K562 (cell line): ENCODE measurements at regions of chr11 and their contacts with region 1.

Region 1: GRCh38 chr11:63838678-63839507 is at the start of gene MARK2:
- DNase-seq: peak; percentile 98 to 99 (median 98)
- ATAC-seq: peak; percentile 93
- H3K4me3 ChIP-seq: peak within 1 kb of the TSS; percentile 95
- H3K27ac ChIP-seq: peak within 1 kb of the TSS; percentile 78
- H3K4me1 ChIP-seq: peaks cover 24 to 27% of the 10 kb centered on the region in 2 experiments; a peak in 4 of 5 replicates
- H3K27me3 ChIP-seq: no peaks in the 10 kb centered on the region
- CTCF ChIP-seq: no peak
- EP300 ChIP-seq: no peak
- POLR2A ChIP-seq: peak; percentile 62; the same call in 1 of the 2 replicates
- RAD21 ChIP-seq: no peak
- polyA plus RNA-seq, gene MARK2: 0.32 to 0.45 TPM

Region 2: DNA sequence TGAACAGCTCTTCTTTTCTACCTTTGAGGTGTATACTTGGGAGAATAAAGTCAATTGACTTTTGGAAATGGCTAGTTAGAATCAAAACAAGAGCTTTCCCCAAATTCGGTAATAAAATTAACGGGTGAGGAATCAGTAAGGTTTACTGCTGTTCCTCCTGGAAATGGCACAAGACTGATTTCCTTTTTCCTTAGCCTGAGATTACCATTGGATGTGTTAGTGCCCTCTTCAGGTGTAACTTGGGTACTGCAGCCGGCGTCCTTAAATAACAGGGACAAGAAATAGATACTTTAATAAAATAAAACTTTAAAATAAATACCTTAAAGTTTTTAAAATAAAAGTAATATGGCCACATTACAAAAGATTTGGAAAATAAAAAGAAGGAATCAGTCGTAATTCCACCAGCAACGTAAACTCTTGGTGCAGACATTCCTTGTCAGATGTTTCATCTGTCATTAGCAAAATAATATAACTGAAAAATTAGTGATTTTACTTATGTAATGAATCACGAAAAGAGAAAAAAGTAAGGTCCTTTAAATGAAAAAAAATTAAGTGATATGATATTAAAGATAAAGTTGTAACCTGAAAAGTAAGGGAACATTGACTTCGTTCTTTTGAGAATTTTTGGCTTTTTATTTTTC is 100.1 kb before region 1 on chr11:
- CTCF ChIA-PET with region 1: no interaction called
- POLR2A ChIA-PET with region 1: no interaction called
- in situ Hi-C with region 1: no loop called
- intact Hi-C with region 1: no loop called
- DNase-seq: peak; percentile 49 to 79 (median 58)
- ATAC-seq: peak; percentile 68
- H3K4me3 ChIP-seq: no peak overlapping the region
- H3K27ac ChIP-seq: no peak overlapping the region
- H3K4me1 ChIP-seq: peaks cover 7 to 8% of the 10 kb centered on the region in 2 experiments; a peak in 3 of 5 replicates
- H3K27me3 ChIP-seq: no peaks in the 10 kb centered on the region
- CTCF ChIP-seq: peak; percentile 70 to 88 (median 75)
- EP300 ChIP-seq: no peak
- POLR2A ChIP-seq: no peak
- RAD21 ChIP-seq: peak; percentile 62 to 65

Region 3: GRCh38 chr11:63768237-63769043 is 70.5 kb before region 1 on chr11 and contains the start of gene ZFTA:
- CTCF ChIA-PET with region 1: interaction called, 5 read pairs
- POLR2A ChIA-PET with region 1: no interaction called
- in situ Hi-C with region 1: no loop called
- intact Hi-C with region 1: loop called (anchors 5 kb)
- DNase-seq: peak; percentile 72 to 91 (median 84)
- ATAC-seq: peak; percentile 70
- H3K4me3 ChIP-seq: peak within 1 kb of the TSS; percentile 60
- H3K27ac ChIP-seq: peak within 1 kb of the TSS; percentile 65
- H3K4me1 ChIP-seq: peaks cover 8 to 48% of the 10 kb centered on the region in 2 experiments
- H3K27me3 ChIP-seq: no peaks in the 10 kb centered on the region
- CTCF ChIP-seq: peak in 2 of 3 experiments; percentile 64 to 79; a peak in 5 of 6 replicates
- EP300 ChIP-seq: no peak
- POLR2A ChIP-seq: no peak
- RAD21 ChIP-seq: peak in 1 of 2 experiments; percentile 76; a peak in 3 of 4 replicates
- polyA plus RNA-seq, gene ZFTA: 0.45 TPM

Region 4: DNA sequence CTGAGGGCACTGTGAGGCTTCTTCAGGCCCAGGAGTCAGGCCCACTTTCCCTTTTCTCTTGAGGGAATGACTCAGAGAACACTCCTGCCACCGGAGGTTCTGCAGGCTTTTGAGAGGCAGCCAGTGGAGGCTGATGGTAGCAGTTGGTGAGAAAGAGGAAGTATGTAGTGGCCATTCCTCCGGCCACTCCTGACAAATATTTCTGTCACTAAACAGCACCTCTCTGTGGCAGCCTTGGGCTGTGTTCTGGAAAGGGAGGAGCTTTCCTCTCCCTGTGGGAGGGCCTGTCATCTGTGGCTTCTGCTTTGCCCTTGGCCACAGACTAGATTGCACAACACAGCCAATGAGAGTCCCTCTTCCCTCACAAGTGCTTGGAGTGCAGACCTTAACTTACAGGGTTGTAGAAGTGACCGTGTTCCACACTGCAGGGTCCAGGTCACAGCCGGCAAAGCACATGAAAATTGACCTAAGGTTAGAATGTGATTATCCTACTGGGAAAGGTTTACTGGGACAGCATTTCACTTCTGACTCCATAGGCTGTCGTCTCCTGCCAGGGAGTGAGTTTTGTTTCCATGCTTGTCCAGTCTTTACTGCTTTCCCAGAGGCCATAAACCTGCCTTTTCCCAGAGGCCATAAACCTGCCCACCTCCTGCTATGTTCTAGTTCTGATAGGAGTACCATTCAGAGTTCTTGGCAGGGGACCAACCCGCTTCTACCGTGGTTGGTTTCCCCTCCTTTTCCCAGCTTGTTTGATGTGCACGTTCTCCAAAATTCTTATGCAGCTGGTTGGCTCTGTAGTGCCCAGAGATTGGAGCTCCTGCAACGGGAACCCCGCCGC is 33.3 kb after region 1 on chr11:
- CTCF ChIA-PET with region 1: interaction called, 12 read pairs
- POLR2A ChIA-PET with region 1: interaction called, 4 read pairs
- in situ Hi-C with region 1: no loop called
- intact Hi-C with region 1: loop called (anchors 1 kb)
- DNase-seq: peak; percentile 85 to 95 (median 90)
- ATAC-seq: peak; percentile 100
- H3K4me3 ChIP-seq: no peak overlapping the region
- H3K27ac ChIP-seq: peak overlapping the region; percentile 64
- H3K4me1 ChIP-seq: peaks cover 35 to 39% of the 10 kb centered on the region in 2 experiments
- H3K27me3 ChIP-seq: no peaks in the 10 kb centered on the region
- CTCF ChIP-seq: peak; percentile 85 to 96 (median 89)
- EP300 ChIP-seq: peak; percentile 55
- POLR2A ChIP-seq: no peak
- RAD21 ChIP-seq: peak; percentile 90 to 92

Region 5: DNA sequence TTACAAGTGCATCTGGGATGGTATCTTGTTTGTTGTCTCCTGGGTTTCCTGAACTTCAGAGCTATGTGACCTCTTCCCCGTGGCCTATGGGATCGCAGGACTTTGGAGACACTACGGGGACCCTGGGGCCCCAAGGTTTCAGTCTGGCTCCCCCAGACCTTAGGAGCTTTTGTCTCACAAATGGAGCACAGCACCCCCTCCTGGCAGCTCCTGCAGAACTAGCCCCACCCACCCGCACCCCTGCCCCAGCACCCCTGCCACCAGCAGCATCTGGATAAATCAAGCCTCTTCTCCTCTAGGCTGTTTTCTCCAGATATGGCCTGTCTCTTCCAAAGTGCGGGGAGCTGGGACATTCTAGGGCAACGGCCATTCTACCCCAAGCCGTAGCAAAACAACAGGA is 67.7 kb after region 1 on chr11:
- CTCF ChIA-PET with region 1: interaction called, 13 read pairs
- POLR2A ChIA-PET with region 1: no interaction called
- in situ Hi-C with region 1: no loop called
- intact Hi-C with region 1: loop called (anchors 1 kb)
- DNase-seq: peak; percentile 52 to 71 (median 66)
- ATAC-seq: peak; percentile 51
- H3K4me3 ChIP-seq: no peak overlapping the region
- H3K27ac ChIP-seq: no peak overlapping the region
- H3K4me1 ChIP-seq: peaks cover 0 to 36% of the 10 kb centered on the region in 2 experiments; a peak in 2 of 5 replicates
- H3K27me3 ChIP-seq: no peaks in the 10 kb centered on the region
- CTCF ChIP-seq: peak; percentile 22 to 42 (median 36); a peak in 4 of 6 replicates
- EP300 ChIP-seq: no peak
- POLR2A ChIP-seq: no peak
- RAD21 ChIP-seq: peak in 1 of 2 experiments; percentile 14; a peak in 1 of 4 replicates

Region 6: GRCh38 chr11:63945477-63946163 is 106.7 kb after region 1 on chr11:
- CTCF ChIA-PET with region 1: interaction called, 21 read pairs
- POLR2A ChIA-PET with region 1: interaction called, 3 read pairs
- in situ Hi-C with region 1: loop called (anchors 10 kb)
- intact Hi-C with region 1: loop called (anchors 1 kb)
- DNase-seq: peak; percentile 58 to 67 (median 62)
- ATAC-seq: peak; percentile 89
- H3K4me3 ChIP-seq: no peak overlapping the region
- H3K27ac ChIP-seq: no peak overlapping the region; the same call in 2 of the 3 replicates
- H3K4me1 ChIP-seq: peaks cover 35 to 40% of the 10 kb centered on the region in 2 experiments
- H3K27me3 ChIP-seq: no peaks in the 10 kb centered on the region
- CTCF ChIP-seq: peak; percentile 69 to 78 (median 74)
- EP300 ChIP-seq: no peak
- POLR2A ChIP-seq: no peak
- RAD21 ChIP-seq: peak; percentile 72 to 79

Region 7: GRCh38 chr11:64152841-64153691 is 314.2 kb after region 1 on chr11:
- CTCF ChIA-PET with region 1: interaction called, 4 read pairs
- POLR2A ChIA-PET with region 1: no interaction called
- in situ Hi-C with region 1: loop called (anchors 5 kb)
- intact Hi-C with region 1: loop called (anchors 2 kb)
- DNase-seq: peak; percentile 72 to 94 (median 92)
- ATAC-seq: peak; percentile 97
- H3K4me3 ChIP-seq: no peak overlapping the region
- H3K27ac ChIP-seq: no peak overlapping the region
- H3K4me1 ChIP-seq: peaks cover 6 to 43% of the 10 kb centered on the region in 2 experiments; a peak in 4 of 5 replicates
- H3K27me3 ChIP-seq: no peaks in the 10 kb centered on the region
- CTCF ChIP-seq: peak; percentile 85 to 95 (median 90)
- EP300 ChIP-seq: no peak
- POLR2A ChIP-seq: no peak
- RAD21 ChIP-seq: peak; percentile 61 to 71

Region 8: DNA sequence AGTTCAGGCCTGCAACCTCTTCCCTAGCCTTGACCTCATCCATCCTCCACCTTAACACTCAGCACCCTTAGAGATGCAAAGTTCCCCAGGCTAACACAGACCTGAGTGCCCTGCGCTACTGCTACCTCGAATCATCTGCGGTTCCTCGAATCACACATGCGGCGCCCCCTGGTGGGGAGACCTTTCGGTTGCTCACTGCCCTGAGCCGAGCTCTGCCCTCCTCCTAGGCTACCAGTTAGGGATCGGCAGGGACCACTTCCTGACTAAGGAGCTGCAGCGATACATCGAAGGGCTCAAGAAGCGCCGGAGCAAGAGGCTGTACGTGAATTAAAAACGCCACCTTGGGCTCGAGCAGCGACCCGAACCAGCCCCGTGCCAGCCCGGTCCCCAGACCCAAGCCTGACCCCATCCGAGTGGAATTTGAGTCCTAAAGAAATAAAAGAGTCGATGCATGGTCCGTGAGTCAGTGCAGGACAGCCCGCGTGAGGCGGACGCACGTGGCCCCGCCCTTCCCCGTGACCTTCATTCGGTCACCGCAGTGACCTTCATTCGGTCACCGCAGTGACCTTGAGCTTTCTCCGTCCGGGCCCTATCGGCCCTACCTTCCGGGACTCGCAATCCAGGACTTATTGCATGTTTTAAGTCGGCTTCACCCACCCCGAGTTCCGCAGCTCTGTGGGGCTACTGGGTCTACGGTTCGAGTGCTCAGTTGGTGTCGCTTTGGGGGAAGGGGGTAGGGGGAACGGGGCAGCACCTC is 465.6 kb after region 1 on chr11:
- CTCF ChIA-PET with region 1: no interaction called
- POLR2A ChIA-PET with region 1: no interaction called
- in situ Hi-C with region 1: no loop called
- intact Hi-C with region 1: loop called (anchors 10 kb)
- DNase-seq: peak; percentile 64 to 95 (median 76)
- ATAC-seq: peak; percentile 69
- H3K4me3 ChIP-seq: peak overlapping the region; percentile 72
- H3K27ac ChIP-seq: peak overlapping the region; percentile 100
- H3K4me1 ChIP-seq: peaks cover 32 to 53% of the 10 kb centered on the region in 2 experiments
- H3K27me3 ChIP-seq: no peaks in the 10 kb centered on the region
- CTCF ChIP-seq: peak; percentile 84 to 94 (median 87)
- EP300 ChIP-seq: peak; percentile 19
- POLR2A ChIP-seq: peak; percentile 77
- RAD21 ChIP-seq: peak; percentile 60 to 65